ENCODE measurements at regions of chr11 and their contacts with region 1.

Region 1: DNA sequence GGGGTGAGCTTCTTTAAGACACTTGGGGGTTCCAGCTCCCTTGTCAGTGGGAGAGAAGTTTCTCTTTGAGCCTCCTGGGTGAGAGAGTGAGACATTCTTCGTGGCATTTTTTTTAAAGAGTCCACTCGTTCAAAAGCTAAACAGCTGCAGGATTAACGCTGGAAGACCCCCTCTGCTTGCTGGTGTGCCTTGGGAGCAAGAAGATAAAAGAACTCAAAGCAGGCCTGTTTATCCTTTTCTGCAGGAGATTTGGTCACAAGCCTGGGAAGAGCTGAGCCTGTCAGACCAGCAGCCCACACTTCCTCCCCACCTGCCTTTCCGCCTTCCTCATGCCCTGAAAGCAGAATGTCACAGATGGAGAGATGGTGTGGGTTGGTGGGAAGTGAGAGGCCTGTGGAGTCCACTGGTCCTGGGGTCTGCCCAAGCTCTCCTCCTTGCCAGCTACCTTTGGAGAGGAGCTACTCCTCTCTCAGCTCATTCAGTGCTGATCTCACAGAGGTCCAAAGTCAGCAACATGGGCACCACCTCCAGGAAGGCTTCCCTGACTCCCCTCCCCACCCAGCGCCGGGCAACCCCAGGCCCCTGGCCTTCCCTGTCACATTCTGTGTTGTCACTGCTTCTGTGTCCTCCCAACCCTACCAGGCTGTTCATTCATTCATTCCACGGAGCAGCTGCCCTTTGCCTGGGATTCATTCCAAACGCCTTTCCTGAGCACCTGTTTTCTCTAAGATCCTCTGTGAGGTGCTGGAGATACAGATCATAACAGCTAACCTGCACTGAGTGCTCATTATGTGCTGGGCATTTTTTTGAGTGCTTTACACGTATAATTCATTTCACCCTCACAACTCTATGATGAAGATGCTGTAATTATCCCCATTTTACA is 6.7 kb downstream of the GDPD5 start:
- DNase-seq: no peak
- ATAC-seq: no peak
- H3K4me3 ChIP-seq: no peak overlapping the region
- H3K27ac ChIP-seq: no peak overlapping the region
- H3K4me1 ChIP-seq: peaks cover under 1% of the 10 kb centered on the region
- H3K27me3 ChIP-seq: no peaks in the 10 kb centered on the region; the same call in 1 of the 2 replicates
- CTCF ChIP-seq: no peak
- POLR2A ChIP-seq: no peak
- RAD21 ChIP-seq: no peak

Region 2: GRCh38 chr11:75468534-75469340 is 50.3 kb before region 1 on chr11:
- CTCF ChIA-PET with region 1: no interaction called
- POLR2A ChIA-PET with region 1: no interaction called
- dilution Hi-C with region 1: no loop called
- in situ Hi-C with region 1: no loop called
- intact Hi-C with region 1: loop called (anchors 5 kb)
- DNase-seq: peak; percentile 93
- ATAC-seq: peak; percentile 69
- H3K4me3 ChIP-seq: no peak overlapping the region
- H3K27ac ChIP-seq: no peak overlapping the region
- H3K4me1 ChIP-seq: peaks cover 22% of the 10 kb centered on the region
- H3K27me3 ChIP-seq: no peaks in the 10 kb centered on the region
- CTCF ChIP-seq: no peak
- POLR2A ChIP-seq: no peak
- RAD21 ChIP-seq: no peak

Region 3: DNA sequence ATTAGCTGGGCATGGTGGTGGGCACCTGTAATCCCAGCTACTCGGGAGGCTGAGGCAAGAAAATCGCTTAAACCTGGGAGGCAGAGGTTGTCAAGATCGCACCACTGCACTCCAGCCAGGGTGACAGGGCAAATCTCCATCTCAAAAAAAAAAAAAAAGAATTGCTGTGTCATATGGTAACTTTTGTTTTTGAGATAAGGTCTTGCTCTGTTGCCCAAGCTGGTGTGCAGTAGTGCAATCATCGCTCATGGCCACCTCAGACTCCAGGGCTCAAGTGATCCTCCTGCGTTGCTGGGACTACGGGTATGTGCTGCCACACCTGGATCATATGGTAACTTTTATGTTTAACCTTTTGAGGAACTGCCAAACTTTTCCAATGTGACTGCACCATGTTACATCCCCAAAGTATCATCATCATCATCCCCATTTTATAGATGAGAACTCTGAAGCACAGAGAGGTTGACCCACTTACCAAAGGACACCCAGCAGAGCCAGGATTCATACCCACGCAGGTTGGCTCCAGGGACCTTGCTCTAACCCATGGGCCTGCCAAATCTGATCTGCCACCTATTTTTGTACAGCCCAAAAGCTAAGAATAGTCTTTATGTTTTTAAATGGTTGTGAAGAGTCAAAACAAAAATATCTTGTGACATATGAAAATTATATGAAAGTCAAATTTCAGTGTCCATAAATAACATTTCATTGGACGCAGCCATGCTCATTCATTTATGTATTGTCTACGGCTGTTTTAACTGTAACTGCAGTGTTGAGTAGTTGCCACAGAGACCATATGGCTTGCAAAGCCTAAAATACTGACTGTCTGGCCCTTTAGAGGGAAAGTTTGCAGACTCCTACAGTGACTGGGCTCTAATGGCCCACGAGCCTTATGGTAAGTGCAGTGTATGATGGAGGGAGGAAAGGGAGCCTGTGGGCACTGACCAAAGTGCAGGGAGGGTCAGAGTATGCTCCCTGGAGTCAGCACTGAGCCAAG is 38.5 kb before region 1 on chr11:
- CTCF ChIA-PET with region 1: no interaction called
- POLR2A ChIA-PET with region 1: no interaction called
- dilution Hi-C with region 1: no loop called
- in situ Hi-C with region 1: no loop called
- intact Hi-C with region 1: no loop called
- DNase-seq: no peak
- ATAC-seq: no peak
- H3K4me3 ChIP-seq: no peak overlapping the region
- H3K27ac ChIP-seq: no peak overlapping the region
- H3K4me1 ChIP-seq: peaks cover 10% of the 10 kb centered on the region
- H3K27me3 ChIP-seq: no peaks in the 10 kb centered on the region; the same call in 1 of the 2 replicates
- CTCF ChIP-seq: no peak
- POLR2A ChIP-seq: no peak
- RAD21 ChIP-seq: no peak

Region 4: GRCh38 chr11:75777461-75778110 is 258.6 kb after region 1 on chr11:
- CTCF ChIA-PET with region 1: no interaction called
- POLR2A ChIA-PET with region 1: no interaction called
- dilution Hi-C with region 1: no loop called
- in situ Hi-C with region 1: no loop called
- intact Hi-C with region 1: no loop called
- DNase-seq: no peak
- ATAC-seq: no peak
- H3K4me3 ChIP-seq: no peak overlapping the region
- H3K27ac ChIP-seq: no peak overlapping the region
- H3K4me1 ChIP-seq: no peaks in the 10 kb centered on the region
- H3K27me3 ChIP-seq: peaks cover 15% of the 10 kb centered on the region; the same call in 1 of the 2 replicates
- CTCF ChIP-seq: no peak
- POLR2A ChIP-seq: no peak
- RAD21 ChIP-seq: no peak

Measured in IMR-90 (cell line).